HEK293 (cell line): ENCODE measurements at regions of chr11 and their contacts with region 1.

Region 1: GRCh38 chr11:69642913-69643632 is 2.1 kb downstream of the CCND1 start:
- H3K4me3 ChIP-seq: peak overlapping the region; percentile 63
- H3K27ac ChIP-seq: peak overlapping the region; percentile 91; the same call in 1 of the 2 replicates
- H3K4me1 ChIP-seq: peaks cover 3% of the 10 kb centered on the region; the same call in 1 of the 2 replicates
- CTCF ChIP-seq: peak; percentile 70

Region 2: DNA sequence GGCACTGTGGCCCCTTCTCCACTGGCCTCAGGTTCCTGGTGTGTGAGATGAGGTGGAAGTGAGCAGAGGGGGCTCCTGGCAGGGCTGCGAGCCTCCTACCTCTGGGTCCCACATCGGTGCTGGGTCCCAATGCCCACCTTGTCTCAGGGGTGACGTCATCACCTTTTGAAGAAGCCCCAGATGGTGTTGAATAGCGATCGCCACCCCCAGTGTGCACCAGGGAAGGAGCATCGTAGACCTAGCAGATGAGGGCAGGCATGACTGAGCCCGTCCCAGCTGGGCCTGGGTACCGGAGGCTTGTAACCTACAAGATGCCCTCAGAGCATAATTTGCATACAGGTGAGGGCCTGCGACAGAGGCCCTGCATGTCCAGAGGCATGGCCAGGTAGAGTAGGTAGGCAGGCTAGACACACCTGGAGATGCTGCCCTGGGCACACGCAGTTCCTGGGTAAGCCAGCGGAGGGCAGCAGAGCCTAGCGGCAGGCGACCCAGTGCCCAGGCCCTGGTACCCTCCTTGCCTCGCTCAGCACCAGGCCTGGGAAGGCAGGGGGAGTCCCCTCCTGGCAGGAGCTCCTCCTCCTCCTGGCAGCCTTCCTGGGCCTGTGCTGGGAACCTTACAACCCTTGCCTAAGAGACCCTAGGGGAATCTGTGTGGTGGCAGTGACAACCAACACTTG is 541.8 kb before region 1 on chr11:
- CTCF ChIA-PET with region 1: interaction called, 54 read pairs
- POLR2A ChIA-PET with region 1: interaction called, 5 read pairs
- H3K4me3 ChIP-seq: no peak overlapping the region
- H3K27ac ChIP-seq: no peak overlapping the region
- H3K4me1 ChIP-seq: no peaks in the 10 kb centered on the region
- CTCF ChIP-seq: peak; percentile 86

Region 3: GRCh38 chr11:69131644-69132300 is 511.3 kb before region 1 on chr11:
- CTCF ChIA-PET with region 1: interaction called, 11 read pairs
- POLR2A ChIA-PET with region 1: interaction called, 6 read pairs
- H3K4me3 ChIP-seq: no peak overlapping the region
- H3K27ac ChIP-seq: no peak overlapping the region
- H3K4me1 ChIP-seq: no peaks in the 10 kb centered on the region
- CTCF ChIP-seq: 0 out of 2 replicates have a peak, but pooled peaks have one; percentile 21

Region 4: GRCh38 chr11:69274531-69275255 is 368.4 kb before region 1 on chr11:
- CTCF ChIA-PET with region 1: no interaction called
- POLR2A ChIA-PET with region 1: interaction called, 16 read pairs
- H3K4me3 ChIP-seq: no peak overlapping the region
- H3K27ac ChIP-seq: no peak overlapping the region
- H3K4me1 ChIP-seq: no peaks in the 10 kb centered on the region
- CTCF ChIP-seq: no peak

Region 5: GRCh38 chr11:69292221-69292648 is 350.8 kb before region 1 on chr11:
- CTCF ChIA-PET with region 1: interaction called, 15 read pairs
- POLR2A ChIA-PET with region 1: interaction called, 7 read pairs
- H3K4me3 ChIP-seq: no peak overlapping the region
- H3K27ac ChIP-seq: no peak overlapping the region
- H3K4me1 ChIP-seq: no peaks in the 10 kb centered on the region
- CTCF ChIP-seq: 0 out of 2 replicates have a peak, but pooled peaks have one; percentile 19

Region 6: DNA sequence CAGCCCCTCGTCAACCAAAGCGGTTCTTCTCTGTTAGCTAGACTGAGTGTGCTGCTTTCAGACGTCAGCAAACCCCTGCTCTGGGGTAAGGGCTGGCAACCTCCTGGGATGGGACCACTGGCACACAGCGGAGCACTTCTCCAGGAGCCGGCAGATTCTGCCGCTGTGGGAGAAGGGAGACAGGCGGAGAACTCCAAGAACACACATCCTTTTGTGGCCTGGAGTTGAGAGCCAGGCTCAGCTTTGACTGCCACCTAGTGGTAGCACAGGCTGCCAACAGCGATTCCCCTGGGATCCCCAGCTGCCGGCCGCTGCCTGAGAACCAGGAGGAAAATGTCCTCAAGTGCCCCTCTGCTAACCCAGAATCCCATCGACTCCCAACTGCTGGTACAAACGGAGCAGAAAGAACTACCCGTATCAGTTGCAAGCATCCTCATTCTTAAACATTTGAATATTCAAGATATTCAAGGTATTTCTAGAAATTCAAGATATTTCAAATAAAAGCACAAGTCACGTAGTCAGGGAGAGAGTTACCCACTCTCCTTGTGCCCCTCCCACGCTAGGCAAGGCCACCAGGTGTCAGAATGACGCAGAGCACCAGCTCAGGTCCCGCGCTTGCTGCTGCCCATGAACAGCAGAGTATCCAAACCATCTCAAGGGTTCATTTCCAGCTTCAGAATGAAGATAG is 27.2 kb after region 1 on chr11:
- CTCF ChIA-PET with region 1: interaction called, 12 read pairs
- POLR2A ChIA-PET with region 1: interaction called, 4 read pairs
- H3K4me3 ChIP-seq: no peak overlapping the region
- H3K27ac ChIP-seq: no peak overlapping the region
- H3K4me1 ChIP-seq: peaks cover 4% of the 10 kb centered on the region; the same call in 1 of the 2 replicates
- CTCF ChIP-seq: peak; percentile 72; the same call in 1 of the 2 replicates